AG04450 (cell line): ENCODE measurements at regions of chr13 and their contacts with region 1.

Region 1: GRCh38 chr13:97328222-97328790 is 105.7 kb upstream of the RAP2A start:
- DNase-seq: peak; percentile 58
- H3K4me3 ChIP-seq: no peak overlapping the region
- H3K27ac ChIP-seq: peak overlapping the region; percentile 92
- H3K27me3 ChIP-seq: no peaks in the 10 kb centered on the region
- CTCF ChIP-seq: no peak

Region 2: DNA sequence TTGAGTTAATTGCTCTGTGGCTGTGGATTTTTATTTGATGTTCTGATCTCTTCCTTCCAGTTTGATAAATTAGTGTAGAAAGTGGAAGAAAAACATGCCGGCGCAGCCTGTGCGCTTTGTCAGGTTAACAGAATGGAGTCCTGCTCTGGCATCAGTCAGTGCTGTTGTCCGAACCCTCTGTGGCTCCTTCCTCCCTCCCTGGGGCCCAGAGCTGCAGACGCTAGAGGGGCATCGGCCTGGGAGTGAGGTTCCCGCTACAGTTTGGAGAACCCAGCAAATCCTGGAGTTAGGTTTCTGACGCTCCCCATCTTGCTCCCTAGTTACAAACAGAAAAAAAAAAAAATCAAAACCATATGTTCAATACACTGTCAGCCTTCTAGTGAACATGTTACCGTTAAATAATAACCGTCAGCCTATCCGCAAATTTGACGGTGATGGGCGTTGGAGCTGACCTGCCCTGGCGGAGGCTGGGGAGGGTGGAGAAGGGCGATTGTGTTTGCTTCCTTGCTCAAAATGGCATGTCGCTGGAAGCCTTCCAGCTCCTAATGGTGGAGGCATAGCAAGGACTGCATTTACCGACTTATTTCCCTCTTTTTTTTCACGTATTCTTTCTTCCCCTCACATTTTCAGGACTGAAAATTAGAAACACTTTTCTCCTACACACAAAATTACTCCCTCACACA is 92.6 kb before region 1 on chr13:
- CTCF ChIA-PET with region 1: no interaction called
- POLR2A ChIA-PET with region 1: interaction called, 12 read pairs
- DNase-seq: no peak
- H3K4me3 ChIP-seq: no peak overlapping the region
- H3K27ac ChIP-seq: no peak overlapping the region
- H3K27me3 ChIP-seq: no peaks in the 10 kb centered on the region
- CTCF ChIP-seq: no peak

Region 3: GRCh38 chr13:97257800-97258799 is 70.2 kb before region 1 on chr13:
- CTCF ChIA-PET with region 1: no interaction called
- POLR2A ChIA-PET with region 1: no interaction called
- DNase-seq: no peak
- H3K4me3 ChIP-seq: no peak overlapping the region
- H3K27ac ChIP-seq: peak overlapping the region; percentile 89
- H3K27me3 ChIP-seq: no peaks in the 10 kb centered on the region
- CTCF ChIP-seq: peak; percentile 32

Region 4: GRCh38 chr13:97339019-97339987 is 11.0 kb after region 1 on chr13:
- CTCF ChIA-PET with region 1: no interaction called
- POLR2A ChIA-PET with region 1: interaction called, 15 read pairs
- DNase-seq: peak; percentile 95
- H3K4me3 ChIP-seq: peak overlapping the region; percentile 15
- H3K27ac ChIP-seq: peak overlapping the region; percentile 71
- H3K27me3 ChIP-seq: no peaks in the 10 kb centered on the region
- CTCF ChIP-seq: no peak

Region 5: GRCh38 chr13:97948041-97948440 is 619.7 kb after region 1 on chr13:
- CTCF ChIA-PET with region 1: no interaction called
- POLR2A ChIA-PET with region 1: interaction called, 14 read pairs
- DNase-seq: no peak
- H3K4me3 ChIP-seq: no peak overlapping the region
- H3K27ac ChIP-seq: peak overlapping the region; percentile 84
- H3K27me3 ChIP-seq: no peaks in the 10 kb centered on the region
- CTCF ChIP-seq: no peak